AG04449 (cell line): ENCODE measurements at regions of chr3 and their contacts with region 1.

Region 1: DNA sequence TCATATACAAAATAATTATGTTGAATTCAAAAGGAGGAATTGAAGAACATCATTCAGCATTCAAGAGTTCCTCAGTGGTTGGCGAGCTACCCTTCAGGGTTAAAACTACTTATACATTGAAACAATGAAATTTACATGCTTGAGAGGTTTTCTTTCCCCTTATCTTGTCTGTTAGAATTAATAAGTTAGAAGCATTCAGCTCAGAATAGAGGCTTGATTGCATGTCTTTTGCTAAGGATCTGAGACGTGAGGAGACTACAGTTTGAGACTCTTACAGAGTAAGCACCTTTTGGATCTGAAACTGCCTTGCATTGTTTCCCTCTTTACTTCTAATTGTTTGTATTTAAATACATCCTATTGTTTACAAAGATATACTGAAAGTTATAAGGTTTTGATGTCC is 157.6 kb downstream of the NSUN3 start:
- DNase-seq: no peak
- H3K4me3 ChIP-seq: no peak overlapping the region
- CTCF ChIP-seq: no peak

Region 2: GRCh38 chr3:94234177-94234788 is 13.9 kb after region 1 on chr3:
- CTCF ChIA-PET with region 1: interaction called, 15 read pairs
- POLR2A ChIA-PET with region 1: no interaction called
- DNase-seq: peak; percentile 5
- H3K4me3 ChIP-seq: no peak overlapping the region
- CTCF ChIP-seq: peak; percentile 69